CD4-positive, alpha-beta T cell (primary cell): ENCODE measurements at regions of chr6 and their contacts with region 1.

Region 1: GRCh38 chr6:156396068-156396771 is 381.0 kb upstream of the ARID1B start:
- DNase-seq: peak in 11 of 14 experiments; percentile 1 to 80 (median 19)
- ATAC-seq: peak; percentile 72
- H3K4me3 ChIP-seq: peak overlapping the region; percentile 37
- H3K4me3 Mint-ChIP-seq: peak overlapping the region; percentile 78
- H3K27ac ChIP-seq: peak overlapping the region; percentile 78 to 91
- H3K27ac Mint-ChIP-seq: peak overlapping the region; percentile 97
- H3K4me1 ChIP-seq: peaks cover 54% of the 10 kb centered on the region
- H3K4me1 Mint-ChIP-seq: peaks cover 97% of the 10 kb centered on the region
- H3K27me3 ChIP-seq: no peaks in the 10 kb centered on the region
- H3K27me3 Mint-ChIP-seq: no peaks in the 10 kb centered on the region
- CTCF ChIP-seq: no peak

Region 2: GRCh38 chr6:155327326-155328073 is 1068.7 kb before region 1 on chr6:
- CTCF ChIA-PET with region 1: no interaction called
- POLR2A ChIA-PET with region 1: interaction called, 3 read pairs
- intact Hi-C with region 1: loop called in 1 of 2 experiments (anchors 10 kb)
- DNase-seq: peak; percentile 39 to 82 (median 57)
- ATAC-seq: peak; percentile 68
- H3K4me3 ChIP-seq: no peak overlapping the region
- H3K4me3 Mint-ChIP-seq: no peak overlapping the region
- H3K27ac ChIP-seq: no peak overlapping the region
- H3K27ac Mint-ChIP-seq: no peak overlapping the region
- H3K4me1 ChIP-seq: no peaks in the 10 kb centered on the region
- H3K4me1 Mint-ChIP-seq: peaks cover 13% of the 10 kb centered on the region
- H3K27me3 ChIP-seq: no peaks in the 10 kb centered on the region
- H3K27me3 Mint-ChIP-seq: no peaks in the 10 kb centered on the region
- CTCF ChIP-seq: peak; percentile 93

Region 3: GRCh38 chr6:156167625-156168071 is 228.6 kb before region 1 on chr6:
- CTCF ChIA-PET with region 1: no interaction called
- POLR2A ChIA-PET with region 1: interaction called, 5 read pairs
- intact Hi-C with region 1: loop called in 1 of 2 experiments (anchors 5 kb)
- DNase-seq: no peak
- ATAC-seq: no peak
- H3K4me3 ChIP-seq: peak overlapping the region; percentile 19
- H3K4me3 Mint-ChIP-seq: peak overlapping the region; percentile 83
- H3K27ac ChIP-seq: peak overlapping the region; percentile 15 to 29
- H3K27ac Mint-ChIP-seq: peak overlapping the region; percentile 91
- H3K4me1 ChIP-seq: peaks cover 6% of the 10 kb centered on the region
- H3K4me1 Mint-ChIP-seq: peaks cover 52% of the 10 kb centered on the region
- H3K27me3 ChIP-seq: no peaks in the 10 kb centered on the region
- H3K27me3 Mint-ChIP-seq: no peaks in the 10 kb centered on the region
- CTCF ChIP-seq: no peak

Region 4: GRCh38 chr6:156191895-156192294 is 204.3 kb before region 1 on chr6:
- CTCF ChIA-PET with region 1: no interaction called
- POLR2A ChIA-PET with region 1: interaction called, 8 read pairs
- intact Hi-C with region 1: loop called in 1 of 2 experiments (anchors 10 kb)
- DNase-seq: peak in 1 of 14 experiments; percentile 42
- ATAC-seq: peak; percentile 77
- H3K4me3 ChIP-seq: no peak overlapping the region
- H3K4me3 Mint-ChIP-seq: peak overlapping the region; percentile 3
- H3K27ac ChIP-seq: no peak overlapping the region
- H3K27ac Mint-ChIP-seq: peak overlapping the region; percentile 57
- H3K4me1 ChIP-seq: no peaks in the 10 kb centered on the region
- H3K4me1 Mint-ChIP-seq: peaks cover 29% of the 10 kb centered on the region
- H3K27me3 ChIP-seq: no peaks in the 10 kb centered on the region
- H3K27me3 Mint-ChIP-seq: no peaks in the 10 kb centered on the region
- CTCF ChIP-seq: no peak

Region 5: DNA sequence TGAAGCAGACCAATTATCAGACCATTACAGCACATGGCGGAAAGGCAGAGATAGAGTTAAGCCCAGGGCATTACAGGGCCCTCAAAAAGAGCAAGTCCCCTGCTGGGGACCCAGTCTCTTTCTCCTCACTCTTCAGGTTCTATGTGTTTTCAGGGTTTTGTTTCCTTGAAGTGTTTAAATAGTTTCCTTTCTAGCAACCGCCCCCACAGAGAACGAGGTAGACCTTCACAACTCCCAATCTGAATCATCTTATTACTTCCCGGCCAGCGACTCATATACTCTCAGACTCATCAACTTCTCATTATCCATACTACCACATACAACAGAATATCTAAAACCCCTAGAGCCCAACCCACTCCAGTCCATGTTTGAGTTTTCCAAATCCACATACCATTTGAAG is 145.6 kb before region 1 on chr6:
- CTCF ChIA-PET with region 1: no interaction called
- POLR2A ChIA-PET with region 1: no interaction called
- intact Hi-C with region 1: no loop called
- DNase-seq: no peak
- ATAC-seq: no peak
- H3K4me3 ChIP-seq: no peak overlapping the region
- H3K4me3 Mint-ChIP-seq: no peak overlapping the region
- H3K27ac ChIP-seq: no peak overlapping the region
- H3K27ac Mint-ChIP-seq: no peak overlapping the region
- H3K4me1 ChIP-seq: no peaks in the 10 kb centered on the region
- H3K4me1 Mint-ChIP-seq: peaks cover 9% of the 10 kb centered on the region
- H3K27me3 ChIP-seq: no peaks in the 10 kb centered on the region
- H3K27me3 Mint-ChIP-seq: no peaks in the 10 kb centered on the region
- CTCF ChIP-seq: no peak

Region 6: GRCh38 chr6:156269751-156270369 is 126.4 kb before region 1 on chr6:
- CTCF ChIA-PET with region 1: no interaction called
- POLR2A ChIA-PET with region 1: interaction called, 22 read pairs
- intact Hi-C with region 1: loop called in 1 of 2 experiments (anchors 2 kb)
- DNase-seq: peak in 8 of 14 experiments; percentile 0 to 32 (median 11)
- ATAC-seq: peak; percentile 87
- H3K4me3 ChIP-seq: peak overlapping the region; percentile 33
- H3K4me3 Mint-ChIP-seq: peak overlapping the region; percentile 76
- H3K27ac ChIP-seq: peak overlapping the region; percentile 1 to 13
- H3K27ac Mint-ChIP-seq: peak overlapping the region; percentile 74
- H3K4me1 ChIP-seq: no peaks in the 10 kb centered on the region
- H3K4me1 Mint-ChIP-seq: peaks cover 27% of the 10 kb centered on the region
- H3K27me3 ChIP-seq: no peaks in the 10 kb centered on the region
- H3K27me3 Mint-ChIP-seq: no peaks in the 10 kb centered on the region
- CTCF ChIP-seq: no peak

Region 7: DNA sequence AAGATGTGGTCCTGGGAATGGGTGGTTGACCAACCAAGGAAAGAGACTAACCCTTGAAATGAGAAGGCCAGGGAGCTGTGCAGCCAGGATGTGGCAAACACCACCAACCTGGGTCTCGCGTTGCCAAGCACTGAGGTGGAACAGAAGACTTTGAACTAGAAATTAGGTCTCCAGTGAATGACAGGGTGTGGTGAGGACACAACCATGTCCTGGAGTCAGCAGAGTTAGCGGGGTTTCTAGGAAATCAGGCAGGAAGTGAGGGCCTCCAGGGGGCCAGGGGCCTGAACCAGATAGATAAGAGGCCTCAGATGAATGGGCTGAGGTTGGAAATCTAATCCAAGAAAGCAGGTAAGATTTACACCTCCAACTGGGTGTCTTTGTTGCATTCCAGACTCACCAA is 27.6 kb after region 1 on chr6:
- CTCF ChIA-PET with region 1: no interaction called
- POLR2A ChIA-PET with region 1: interaction called, 20 read pairs
- intact Hi-C with region 1: no loop called
- DNase-seq: peak in 8 of 14 experiments; percentile 3 to 72 (median 20)
- ATAC-seq: peak; percentile 62
- H3K4me3 ChIP-seq: no peak overlapping the region
- H3K4me3 Mint-ChIP-seq: peak overlapping the region; percentile 17
- H3K27ac ChIP-seq: peak overlapping the region in 1 of 2 donors; percentile 38
- H3K27ac Mint-ChIP-seq: peak overlapping the region; percentile 63
- H3K4me1 ChIP-seq: peaks cover 25% of the 10 kb centered on the region
- H3K4me1 Mint-ChIP-seq: peaks cover 49% of the 10 kb centered on the region
- H3K27me3 ChIP-seq: no peaks in the 10 kb centered on the region
- H3K27me3 Mint-ChIP-seq: no peaks in the 10 kb centered on the region
- CTCF ChIP-seq: no peak

Region 8: GRCh38 chr6:156686995-156687788 is 291.0 kb after region 1 on chr6:
- CTCF ChIA-PET with region 1: no interaction called
- POLR2A ChIA-PET with region 1: interaction called, 27 read pairs
- intact Hi-C with region 1: loop called (anchors 1 to 10 kb)
- DNase-seq: peak; percentile 53 to 94 (median 76)
- ATAC-seq: peak; percentile 76
- H3K4me3 ChIP-seq: peak overlapping the region; percentile 82
- H3K4me3 Mint-ChIP-seq: peak overlapping the region; percentile 92
- H3K27ac ChIP-seq: peak overlapping the region; percentile 91 to 97
- H3K27ac Mint-ChIP-seq: peak overlapping the region; percentile 92
- H3K4me1 ChIP-seq: peaks cover 14% of the 10 kb centered on the region
- H3K4me1 Mint-ChIP-seq: peaks cover 24% of the 10 kb centered on the region
- H3K27me3 ChIP-seq: no peaks in the 10 kb centered on the region
- H3K27me3 Mint-ChIP-seq: no peaks in the 10 kb centered on the region
- CTCF ChIP-seq: no peak